ENCODE measurements at regions of chr2 and their contacts with region 1.

Region 1: GRCh38 chr2:143217512-143218115 is 88.4 kb downstream of the ARHGAP15 start:
- DNase-seq: no peak
- H3K4me3 Mint-ChIP-seq: no peak overlapping the region
- H3K27ac Mint-ChIP-seq: peak overlapping the region; percentile 84
- H3K4me1 Mint-ChIP-seq: peaks cover 35% of the 10 kb centered on the region
- H3K27me3 Mint-ChIP-seq: no peaks in the 10 kb centered on the region

Region 2: DNA sequence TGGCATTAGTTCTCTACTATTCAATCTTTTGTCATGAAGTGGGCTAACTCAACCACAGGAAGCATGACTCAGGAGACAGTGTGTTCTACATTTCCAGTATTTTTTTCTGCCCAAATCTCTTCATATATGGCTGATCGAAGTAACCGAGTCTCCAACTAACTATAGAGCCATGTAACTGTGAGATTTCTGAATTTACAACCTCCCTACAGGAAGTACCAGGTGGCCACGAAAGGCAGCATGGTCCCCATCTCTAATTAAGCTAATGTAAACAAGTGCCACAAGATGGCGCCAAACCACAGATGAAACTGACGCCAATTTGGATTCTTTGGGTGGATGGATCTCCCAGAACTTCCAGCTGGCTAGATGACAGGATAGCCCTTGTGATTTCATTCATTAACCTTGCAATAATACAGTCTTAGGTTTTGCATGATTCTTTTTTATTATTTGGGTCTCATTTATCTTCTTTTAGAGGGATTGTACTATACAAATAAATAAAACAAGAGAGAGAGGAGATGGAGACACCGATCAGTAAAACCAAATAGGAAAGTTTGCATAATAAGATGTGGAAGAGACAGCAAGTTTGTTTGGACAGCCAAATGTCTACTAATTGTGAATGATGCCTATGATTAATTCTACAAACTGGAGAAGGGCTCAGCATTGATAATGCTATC is 106.7 kb before region 1 on chr2:
- CTCF ChIA-PET with region 1: interaction called, 38 read pairs
- DNase-seq: peak; percentile 76
- H3K4me3 Mint-ChIP-seq: no peak overlapping the region
- H3K27ac Mint-ChIP-seq: peak overlapping the region; percentile 44
- H3K4me1 Mint-ChIP-seq: peaks cover 44% of the 10 kb centered on the region
- H3K27me3 Mint-ChIP-seq: no peaks in the 10 kb centered on the region

Region 3: DNA sequence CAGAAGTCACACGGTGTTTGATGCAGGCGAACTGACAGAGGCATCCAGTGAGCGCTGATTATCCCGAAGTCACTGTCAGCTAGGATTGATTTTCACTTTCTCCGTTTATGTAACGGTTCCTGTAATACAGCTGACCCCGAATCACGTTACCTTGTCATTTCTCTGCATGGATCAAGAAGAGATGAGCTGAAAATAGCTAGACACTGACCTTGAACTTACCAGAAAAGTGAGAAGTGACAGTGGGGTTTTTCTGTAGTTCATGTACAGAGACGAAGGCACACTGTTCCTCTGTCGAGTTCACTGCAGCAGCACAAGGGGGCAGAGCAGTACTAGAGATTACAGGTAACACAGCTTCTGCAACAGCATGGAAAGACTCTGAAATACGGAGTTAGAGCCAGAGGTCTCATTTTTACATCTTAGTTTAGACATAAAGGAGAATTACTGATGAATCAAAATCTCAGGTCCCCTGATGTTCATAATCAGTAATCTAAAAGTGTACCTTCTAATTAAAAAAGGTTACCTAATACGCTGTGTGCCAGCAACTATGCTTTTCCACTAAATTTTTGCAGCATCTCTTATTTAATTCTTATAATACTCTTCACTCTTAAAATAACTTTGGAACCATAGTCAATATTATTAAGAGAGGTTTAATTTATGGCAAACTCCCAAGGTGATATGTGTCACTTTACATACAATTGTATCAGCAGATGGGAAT is 55.3 kb before region 1 on chr2:
- CTCF ChIA-PET with region 1: interaction called, 11 read pairs
- DNase-seq: peak; percentile 70
- H3K4me3 Mint-ChIP-seq: no peak overlapping the region
- H3K27ac Mint-ChIP-seq: peak overlapping the region; percentile 8
- H3K4me1 Mint-ChIP-seq: peaks cover 75% of the 10 kb centered on the region
- H3K27me3 Mint-ChIP-seq: no peaks in the 10 kb centered on the region

Region 4: DNA sequence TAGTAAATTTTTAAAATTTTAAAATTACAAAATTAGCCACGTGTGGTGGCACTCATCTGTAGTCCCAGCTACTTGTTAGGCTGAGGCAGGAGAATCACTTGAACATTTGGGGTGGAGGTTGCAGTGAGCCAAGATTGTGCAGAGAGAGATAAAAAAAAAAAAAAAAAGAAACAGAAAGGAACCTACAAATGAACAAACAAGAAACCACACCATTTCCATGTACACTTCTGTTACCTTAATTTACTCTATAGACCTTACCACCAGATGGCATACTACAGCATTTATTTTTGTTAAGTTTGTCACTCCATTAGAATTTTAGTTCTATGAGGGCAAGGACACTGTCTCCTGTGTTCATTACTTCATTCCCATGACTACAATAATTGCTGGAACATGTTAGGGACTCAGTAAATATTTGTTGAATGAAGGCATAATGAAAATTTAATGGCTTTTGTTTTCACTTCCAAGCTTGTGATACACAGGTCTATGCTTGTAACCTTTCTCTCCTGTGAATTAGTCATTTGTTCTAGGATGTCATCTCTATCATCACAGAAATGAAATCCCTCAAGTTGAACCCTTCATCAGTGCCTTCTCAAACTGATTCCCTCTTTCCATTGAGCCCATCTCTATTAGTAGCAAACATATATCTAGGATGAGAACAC is 12.4 kb before region 1 on chr2:
- CTCF ChIA-PET with region 1: interaction called, 12 read pairs
- DNase-seq: peak; percentile 37
- H3K4me3 Mint-ChIP-seq: no peak overlapping the region
- H3K27ac Mint-ChIP-seq: peak overlapping the region; percentile 86
- H3K4me1 Mint-ChIP-seq: peaks cover 47% of the 10 kb centered on the region
- H3K27me3 Mint-ChIP-seq: no peaks in the 10 kb centered on the region

Measured in activated naive CD4-positive, alpha-beta T cell treated with anti-CD3 and anti-CD28 coated beads, Interleukin-2, amount 10 ng/mL, durations not matched to agents 7 days and 5 days (primary cell).